Activated CD4-positive, alpha-beta memory T cell treated with anti-CD3 and anti-CD28 coated beads for 36 hours (primary cell): ENCODE measurements at regions of chr7 and their contacts with region 1.

Region 1: GRCh38 chr7:64313740-64314491 is at the start of gene ZNF736:
- DNase-seq: peak; percentile 94
- H3K4me3 Mint-ChIP-seq: peak within 1 kb of the TSS; percentile 99
- H3K27ac Mint-ChIP-seq: peak within 1 kb of the TSS; percentile 97
- H3K4me1 Mint-ChIP-seq: peaks cover 35% of the 10 kb centered on the region
- H3K27me3 Mint-ChIP-seq: no peaks in the 10 kb centered on the region
- total RNA-seq, gene ZNF736: 23.6 TPM

Region 2: DNA sequence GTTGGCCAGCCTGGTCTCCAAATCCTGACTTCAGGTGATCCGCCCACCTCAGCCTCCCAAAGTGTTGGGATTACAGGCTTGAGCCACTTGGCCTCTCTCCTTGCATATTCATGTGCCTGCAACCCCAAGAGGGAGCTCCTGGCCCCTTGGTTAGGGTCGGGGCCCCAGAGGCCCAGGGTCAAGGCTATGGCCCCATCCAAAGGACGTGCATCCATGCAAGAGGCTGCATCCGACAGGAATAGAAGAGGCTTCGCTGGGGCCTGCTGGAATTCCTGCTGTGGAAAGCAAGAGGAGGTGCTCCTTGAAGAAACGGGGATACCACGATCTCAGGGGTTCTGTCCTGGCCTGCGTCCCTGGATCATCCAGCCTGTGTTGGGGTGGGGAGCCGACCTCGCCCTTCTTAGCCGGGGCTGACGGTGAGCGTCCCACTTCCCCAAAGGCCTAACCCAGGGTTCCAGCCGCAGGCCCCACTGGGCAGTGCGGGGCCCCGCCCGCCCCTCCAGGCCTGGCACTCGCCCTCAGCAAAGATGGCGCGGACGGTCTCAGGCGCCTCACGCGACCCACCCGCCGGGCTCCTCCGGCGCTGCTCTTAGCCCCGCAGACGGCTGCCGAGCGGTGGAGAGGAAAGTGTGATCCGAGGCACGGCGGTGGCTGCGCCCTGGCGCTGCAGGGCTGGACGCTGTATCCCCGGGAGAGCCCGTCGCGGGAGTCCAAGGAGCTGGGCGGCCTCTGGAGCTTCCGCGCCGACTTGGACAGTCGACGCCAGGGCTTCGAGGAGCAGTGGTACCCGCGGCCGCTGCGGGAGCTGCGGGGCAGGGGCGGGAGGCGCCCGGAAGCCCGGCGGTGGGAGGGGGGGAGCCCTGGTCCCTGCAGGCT is 214.0 kb before region 1 on chr7:
- CTCF ChIA-PET with region 1: no interaction called
- POLR2A ChIA-PET with region 1: no interaction called
- intact Hi-C with region 1: no loop called
- DNase-seq: no peak
- H3K4me3 Mint-ChIP-seq: no peak overlapping the region
- H3K27ac Mint-ChIP-seq: no peak overlapping the region
- H3K4me1 Mint-ChIP-seq: no peaks in the 10 kb centered on the region
- H3K27me3 Mint-ChIP-seq: no peaks in the 10 kb centered on the region

Region 3: DNA sequence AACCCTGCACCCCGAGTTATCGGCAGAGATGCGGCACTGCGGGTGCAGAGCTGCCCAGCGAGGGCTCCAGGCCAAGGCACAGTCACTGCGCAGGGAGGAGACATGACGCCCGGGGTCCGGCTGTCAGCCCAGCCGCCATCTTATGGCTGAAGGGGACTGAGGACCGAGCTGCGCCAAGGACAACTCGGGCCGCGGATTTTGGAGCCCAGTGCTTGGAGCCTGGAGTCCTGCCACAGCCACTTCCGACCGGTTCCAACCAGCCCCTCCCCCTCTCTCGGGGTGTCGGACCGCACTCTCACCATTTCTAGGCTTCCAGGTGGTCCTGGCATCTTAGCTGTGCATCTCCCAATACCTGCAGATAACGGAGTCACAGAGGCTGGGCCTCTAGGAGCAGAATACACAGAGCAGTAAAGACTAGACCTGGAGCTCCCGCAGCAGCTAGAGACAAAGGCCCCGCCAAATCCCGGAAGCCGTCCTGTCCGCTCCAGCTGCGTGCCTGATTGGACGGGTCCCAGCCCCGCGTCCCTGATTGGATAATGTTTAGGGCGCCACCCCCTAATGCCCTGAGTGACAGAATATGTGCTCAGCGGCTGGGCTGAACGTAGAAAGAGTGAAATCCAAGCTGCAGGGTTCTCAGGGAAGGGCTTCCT is 248.8 kb after region 1 on chr7 and contains the start of gene ZNF680:
- CTCF ChIA-PET with region 1: interaction called, 4 read pairs
- POLR2A ChIA-PET with region 1: interaction called, 14 read pairs
- intact Hi-C with region 1: no loop called
- DNase-seq: peak; percentile 95
- H3K4me3 Mint-ChIP-seq: peak within 1 kb of the TSS; percentile 97
- H3K27ac Mint-ChIP-seq: peak within 1 kb of the TSS; percentile 96
- H3K4me1 Mint-ChIP-seq: peaks cover 16% of the 10 kb centered on the region
- H3K27me3 Mint-ChIP-seq: no peaks in the 10 kb centered on the region
- total RNA-seq, gene ZNF680: 13.0 to 13.5 TPM

Region 4: DNA sequence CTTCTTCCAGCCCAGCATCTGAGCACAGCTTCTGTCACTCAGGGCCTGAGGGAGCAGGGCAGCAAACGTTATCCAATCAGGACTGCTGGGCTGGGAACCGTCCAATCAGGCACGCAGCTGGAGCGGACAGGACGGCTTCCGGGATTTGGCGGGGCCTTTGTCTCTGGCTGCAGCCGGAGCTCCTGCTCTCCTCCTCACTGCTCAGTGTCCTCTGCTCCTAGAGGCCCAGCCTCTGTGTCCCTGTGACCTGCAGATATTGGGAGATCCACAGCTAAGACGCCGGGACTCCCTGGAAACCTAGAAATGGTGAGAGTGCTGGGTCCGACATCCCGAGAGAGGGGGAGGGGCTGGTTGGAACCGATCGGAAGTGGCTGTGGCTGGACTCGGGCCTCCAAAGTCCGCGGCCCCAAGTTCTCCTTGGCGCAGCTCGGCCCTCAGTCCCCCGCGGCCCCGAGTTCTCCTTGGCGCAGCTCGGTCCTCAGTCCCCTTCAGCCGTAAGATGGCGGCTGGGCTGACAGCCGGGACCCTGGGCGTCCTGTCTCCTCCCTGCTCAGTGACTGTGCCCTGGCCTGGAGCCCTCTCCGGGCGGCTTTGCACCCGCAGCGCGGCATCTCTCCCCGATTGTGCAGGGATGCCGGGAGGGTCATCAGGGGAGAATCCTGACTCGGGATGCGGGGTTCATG is 352.2 kb after region 1 on chr7 and contains the start of gene ZNF107:
- CTCF ChIA-PET with region 1: no interaction called
- POLR2A ChIA-PET with region 1: interaction called, 7 read pairs
- intact Hi-C with region 1: loop called (anchors 2 kb)
- DNase-seq: peak; percentile 94
- H3K4me3 Mint-ChIP-seq: peak within 1 kb of the TSS; percentile 90
- H3K27ac Mint-ChIP-seq: peak within 1 kb of the TSS; percentile 95
- H3K4me1 Mint-ChIP-seq: peaks cover 43% of the 10 kb centered on the region
- H3K27me3 Mint-ChIP-seq: no peaks in the 10 kb centered on the region
- total RNA-seq, gene ZNF107: 13.5 to 14.3 TPM

Region 5: DNA sequence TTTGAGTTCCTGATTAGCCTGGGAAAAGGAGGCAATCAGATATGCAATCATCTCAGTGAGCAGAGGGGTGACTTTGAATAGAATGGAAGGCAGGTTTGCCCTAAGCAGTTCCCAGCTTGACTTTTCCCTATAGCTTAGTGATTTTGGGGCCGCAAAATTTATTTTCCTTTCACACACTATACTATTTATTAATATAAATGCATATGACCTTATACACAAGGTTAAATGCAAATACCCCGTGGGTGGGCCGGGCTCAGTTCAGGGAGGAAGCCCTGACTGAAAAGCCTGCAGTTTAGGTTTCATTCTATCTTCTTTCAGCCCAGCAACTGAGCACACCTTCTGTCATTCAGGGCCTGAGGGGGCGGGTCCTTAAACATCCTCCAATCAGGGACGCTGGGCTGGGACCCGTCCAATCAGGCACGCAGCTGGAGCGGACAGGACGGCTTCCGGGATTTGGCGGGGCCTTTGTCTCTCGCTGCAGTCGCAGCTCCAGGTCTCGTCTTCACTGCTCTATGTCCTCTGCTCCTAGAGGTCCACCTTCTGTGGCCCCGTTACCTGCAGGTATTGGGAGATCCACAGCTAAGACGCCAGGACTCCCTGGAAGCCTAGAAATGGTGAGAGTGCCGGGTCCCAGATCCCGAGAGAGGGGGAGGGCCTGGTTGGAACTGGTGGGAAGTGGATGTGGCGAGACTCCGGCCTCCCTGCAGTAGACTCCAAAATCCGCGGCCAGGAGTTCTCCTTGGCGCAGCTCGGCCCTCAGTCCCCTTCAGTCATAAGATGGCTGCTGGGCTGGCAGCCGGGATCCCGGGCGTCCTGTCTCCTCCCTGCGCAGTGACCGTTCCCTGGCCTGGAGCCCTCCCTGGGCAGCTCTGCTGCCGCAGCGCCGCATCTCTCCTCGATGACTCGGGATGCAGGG is 589.1 kb after region 1 on chr7 and contains the start of gene ZNF273:
- CTCF ChIA-PET with region 1: no interaction called
- POLR2A ChIA-PET with region 1: no interaction called
- intact Hi-C with region 1: loop called (anchors 5 kb)
- DNase-seq: peak; percentile 95
- H3K4me3 Mint-ChIP-seq: peak within 1 kb of the TSS; percentile 92
- H3K27ac Mint-ChIP-seq: peak within 1 kb of the TSS; percentile 87
- H3K4me1 Mint-ChIP-seq: peaks cover 39% of the 10 kb centered on the region
- H3K27me3 Mint-ChIP-seq: no peaks in the 10 kb centered on the region
- total RNA-seq, gene ZNF273: 9.6 to 10.9 TPM

Region 6: DNA sequence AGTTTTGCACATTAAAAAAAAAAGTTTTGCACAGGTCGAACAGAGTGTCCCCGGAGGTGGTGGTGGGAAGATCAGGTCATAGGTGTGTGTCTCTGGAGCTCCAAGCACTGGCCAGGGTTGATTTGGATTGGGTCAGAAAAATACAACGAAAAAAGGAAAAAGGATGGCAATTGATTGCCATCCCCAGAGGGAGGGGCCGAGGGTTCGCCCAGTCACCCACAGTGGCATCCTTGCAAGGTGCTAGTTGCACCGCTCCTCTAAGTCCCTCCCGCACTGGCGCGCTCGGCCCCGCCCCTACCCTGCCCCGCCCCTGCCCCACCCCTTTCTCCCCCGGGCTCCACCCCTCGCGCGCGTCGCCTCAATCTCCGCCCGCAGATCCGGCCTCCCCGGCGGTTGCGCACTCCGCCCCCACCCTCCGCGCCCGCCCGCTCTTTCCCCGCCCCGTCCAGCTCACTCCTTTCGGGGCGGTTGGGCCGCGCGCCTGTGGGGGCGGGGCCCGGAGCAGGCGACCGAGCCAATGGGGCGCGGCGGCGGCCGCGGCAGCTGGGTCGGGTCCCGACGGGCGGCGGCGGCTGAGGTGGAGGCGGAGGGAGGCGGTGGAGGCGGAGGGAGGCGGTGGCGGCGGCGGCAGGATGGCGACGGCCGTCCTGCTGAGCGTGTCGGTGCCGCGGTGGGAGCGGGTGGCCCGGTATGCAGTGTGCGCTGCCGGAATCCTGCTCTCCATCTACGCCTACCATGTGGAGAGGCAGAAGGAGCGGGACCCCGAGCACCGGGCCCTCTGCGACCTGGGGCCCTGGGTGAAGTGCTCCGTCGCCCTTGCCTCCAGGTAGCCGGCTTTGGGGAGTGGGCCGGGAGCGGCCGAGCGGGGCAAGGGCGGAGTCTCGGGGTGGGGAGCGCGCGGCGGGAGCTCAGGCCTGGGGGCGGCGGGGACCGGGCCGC is 724.1 kb after region 1 on chr7:
- CTCF ChIA-PET with region 1: no interaction called
- POLR2A ChIA-PET with region 1: no interaction called
- intact Hi-C with region 1: loop called (anchors 1 kb)
- DNase-seq: peak; percentile 96
- H3K4me3 Mint-ChIP-seq: peak overlapping the region; percentile 73
- H3K27ac Mint-ChIP-seq: no peak overlapping the region
- H3K4me1 Mint-ChIP-seq: peaks cover 13% of the 10 kb centered on the region
- H3K27me3 Mint-ChIP-seq: no peaks in the 10 kb centered on the region